Activated CD4-positive, alpha-beta T cell treated with anti-CD3 and anti-CD28 coated beads, Interleukin-2, amount 10 ng/mL, durations not matched to agents 24 days and 14 days (primary cell): ENCODE measurements at regions of chr3 and their contacts with region 1.

Region 1: GRCh38 chr3:39383045-39383880 is at the start of gene SLC25A38:
- DNase-seq: peak; percentile 94
- H3K4me3 Mint-ChIP-seq: peak within 1 kb of the TSS; percentile 100
- H3K27ac Mint-ChIP-seq: peak within 1 kb of the TSS; percentile 99
- H3K4me1 Mint-ChIP-seq: peaks cover 33% of the 10 kb centered on the region
- H3K27me3 Mint-ChIP-seq: no peaks in the 10 kb centered on the region
- total RNA-seq, gene SLC25A38: 37.8 and 38.2 TPM in 2 replicates

Region 2: DNA sequence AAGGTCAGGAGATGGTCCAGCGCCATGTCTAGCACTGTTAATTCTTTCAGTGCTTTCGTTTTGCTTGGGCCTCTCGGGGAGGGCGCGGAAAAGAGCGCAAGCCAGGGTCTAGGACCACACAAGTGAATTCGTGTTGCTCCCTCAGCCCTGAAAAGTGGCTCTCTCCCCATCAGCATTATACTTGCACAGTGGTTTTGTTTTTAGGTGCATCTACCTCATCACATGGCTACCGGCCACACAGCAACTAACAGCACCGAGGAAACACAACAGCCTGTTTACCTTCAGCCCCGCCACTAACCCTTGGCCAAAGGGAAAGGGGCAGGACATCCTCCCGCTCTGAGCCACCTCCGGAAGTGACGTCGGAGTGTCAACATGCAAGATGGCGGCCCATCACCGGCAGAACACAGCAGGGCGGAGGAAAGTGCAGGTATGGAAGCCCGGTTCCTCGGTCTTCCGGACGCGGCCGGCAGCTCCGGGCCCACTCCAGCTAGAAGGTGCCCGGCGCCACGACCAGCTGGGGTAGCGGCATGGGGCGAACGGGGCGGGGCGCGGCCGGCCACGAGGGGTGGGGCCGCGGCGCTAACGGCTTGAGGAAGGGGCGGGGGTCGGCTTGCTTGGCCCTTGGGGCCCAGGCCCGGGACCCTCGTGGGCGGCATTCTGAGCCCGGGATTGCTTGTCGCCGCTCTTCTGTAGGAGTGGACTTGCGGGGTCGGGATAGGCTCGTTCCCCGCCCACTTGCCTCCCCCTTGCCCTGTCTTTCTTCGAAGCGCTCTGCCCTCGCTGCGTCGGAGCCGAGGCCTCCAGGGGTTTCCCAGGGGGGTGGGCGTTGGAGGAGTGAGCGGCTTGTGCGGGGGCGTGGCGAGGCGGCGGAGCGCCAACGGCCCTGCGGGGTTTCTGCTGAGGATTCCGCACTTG is 331.4 kb before region 1 on chr3 and contains the starts of genes SCN11A and WDR48:
- intact Hi-C with region 1: loop called (anchors 5 kb)
- DNase-seq: peak; percentile 98
- H3K4me3 Mint-ChIP-seq: peak within 1 kb of the TSS; percentile 92
- H3K27ac Mint-ChIP-seq: peak within 1 kb of the TSS; percentile 96
- H3K4me1 Mint-ChIP-seq: peaks cover 22% of the 10 kb centered on the region
- H3K27me3 Mint-ChIP-seq: peaks cover 2% of the 10 kb centered on the region
- total RNA-seq, gene SCN11A: not detected in 2 replicates
- total RNA-seq, gene WDR48: 35.4 and 40.5 TPM in 2 replicates

Region 3: DNA sequence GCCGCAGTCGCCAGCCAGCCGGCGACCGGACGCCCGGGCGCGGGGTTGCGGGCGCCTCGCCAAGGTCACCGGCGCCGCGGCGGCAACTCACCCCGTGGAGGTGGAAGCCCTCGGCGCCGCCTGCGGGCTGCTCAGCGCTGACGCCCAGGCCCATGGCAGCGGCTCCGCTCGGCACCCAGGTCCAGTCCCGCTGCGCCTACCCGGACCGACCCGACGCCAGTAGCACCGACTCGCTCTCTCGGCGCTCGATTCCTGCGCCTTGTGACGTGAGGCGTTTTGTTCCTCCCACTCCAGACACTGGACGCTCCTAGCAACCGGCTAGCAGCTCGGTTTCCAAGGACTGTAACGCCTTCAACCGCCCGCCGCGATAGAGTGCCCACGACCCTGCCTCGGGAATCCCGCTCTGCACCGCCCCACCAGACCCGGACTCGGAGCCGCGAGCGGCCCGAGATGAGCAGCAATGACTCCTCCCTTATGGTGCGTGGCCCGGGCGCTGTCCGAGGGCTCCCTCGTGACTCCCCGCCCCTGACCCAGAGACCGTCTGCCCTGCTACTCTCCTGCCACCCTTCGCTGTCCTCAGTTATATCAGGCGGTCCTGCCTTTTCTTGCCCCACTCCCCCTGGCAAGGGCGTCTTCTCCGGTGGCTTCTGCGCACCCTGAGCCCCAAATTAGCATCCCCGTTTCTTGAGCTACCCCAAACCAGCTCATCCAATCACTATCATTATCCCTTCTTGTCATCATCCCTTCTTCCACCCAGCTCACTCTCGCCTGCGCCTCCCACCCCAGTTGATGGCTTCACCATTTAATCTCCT is 275.7 kb before region 1 on chr3 and contains the starts of genes GORASP1 and TTC21A:
- intact Hi-C with region 1: loop called (anchors 5 kb)
- DNase-seq: peak; percentile 91
- H3K4me3 Mint-ChIP-seq: peak within 1 kb of the TSS; percentile 92
- H3K27ac Mint-ChIP-seq: peak within 1 kb of the TSS; percentile 89
- H3K4me1 Mint-ChIP-seq: peaks cover 49% of the 10 kb centered on the region
- H3K27me3 Mint-ChIP-seq: no peaks in the 10 kb centered on the region
- total RNA-seq, gene GORASP1: 31.5 and 32.1 TPM in 2 replicates
- total RNA-seq, gene TTC21A: 0.54 and 0.89 TPM in 2 replicates

Region 4: DNA sequence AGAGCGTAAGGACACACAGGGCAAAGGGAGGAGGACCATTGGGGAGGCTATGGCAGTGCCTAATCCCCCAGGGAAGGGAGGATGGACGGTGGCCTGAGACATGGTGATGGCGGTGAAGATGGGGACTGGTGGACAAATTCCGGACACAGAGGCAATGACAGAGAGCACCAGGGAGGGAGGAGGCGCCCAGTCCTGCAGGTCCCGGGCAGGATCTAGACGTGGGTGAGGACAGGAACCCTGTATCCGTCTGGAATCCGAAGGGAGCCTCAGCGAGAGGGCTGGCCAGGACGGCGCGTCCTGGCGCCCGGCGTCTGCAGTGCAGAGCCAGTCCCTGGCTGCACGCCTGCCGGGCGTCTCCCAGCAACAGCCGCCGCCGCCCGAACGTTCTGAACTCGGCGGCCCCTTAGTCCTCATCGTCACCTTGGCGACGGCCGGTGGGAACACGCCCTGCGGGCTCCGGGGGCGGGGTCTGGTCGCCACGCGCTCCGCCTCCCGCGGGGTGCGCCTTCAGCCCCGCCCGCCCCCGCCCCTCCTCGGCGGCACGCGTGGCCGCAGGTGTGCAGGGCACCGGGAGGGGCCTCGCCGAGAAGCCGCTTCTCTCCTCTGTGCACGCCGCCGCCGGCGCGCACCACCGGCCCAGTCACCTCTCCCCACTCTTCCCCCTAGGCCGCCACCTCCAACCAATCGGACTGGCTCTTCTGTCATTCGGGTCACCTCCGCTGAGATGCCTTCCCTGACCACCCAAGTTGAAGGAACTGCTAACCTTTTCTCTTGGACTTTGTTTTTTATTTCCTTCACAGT is 202.5 kb before region 1 on chr3:
- intact Hi-C with region 1: loop called (anchors 5 kb)
- DNase-seq: peak; percentile 97
- H3K4me3 Mint-ChIP-seq: peak overlapping the region; percentile 84
- H3K27ac Mint-ChIP-seq: peak overlapping the region; percentile 69
- H3K4me1 Mint-ChIP-seq: peaks cover 50% of the 10 kb centered on the region
- H3K27me3 Mint-ChIP-seq: no peaks in the 10 kb centered on the region

Region 5: DNA sequence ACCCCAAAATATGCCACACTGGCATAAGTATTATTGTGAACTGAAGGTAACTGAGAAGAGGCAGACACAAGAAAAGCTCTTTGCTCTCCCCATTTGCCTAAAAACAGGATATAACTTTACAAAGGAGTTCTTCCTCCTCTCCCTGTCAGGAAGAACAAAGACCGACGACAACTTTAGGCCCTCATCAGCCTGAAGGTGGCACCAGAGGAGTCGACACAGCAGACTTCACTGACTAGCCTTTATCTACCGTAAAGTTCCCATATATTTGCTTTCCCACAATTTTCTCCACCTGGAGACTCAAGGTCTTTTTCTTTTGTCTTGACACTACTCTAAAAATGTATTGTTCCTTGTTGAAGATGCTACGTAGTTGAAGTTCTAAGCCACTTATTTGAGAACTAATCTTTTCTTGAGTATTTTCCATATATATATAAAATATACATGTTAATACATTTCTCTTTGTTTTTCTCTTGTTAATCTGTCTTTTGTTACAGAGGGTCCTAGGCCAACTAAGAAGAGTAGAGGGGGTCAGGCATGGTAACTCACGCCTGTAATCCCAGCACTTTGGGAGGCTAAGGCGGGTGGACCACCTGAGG is 174.7 kb before region 1 on chr3:
- intact Hi-C with region 1: loop called (anchors 5 kb)
- DNase-seq: peak; percentile 81
- H3K4me3 Mint-ChIP-seq: no peak overlapping the region
- H3K27ac Mint-ChIP-seq: no peak overlapping the region
- H3K4me1 Mint-ChIP-seq: peaks cover 15% of the 10 kb centered on the region
- H3K27me3 Mint-ChIP-seq: peaks cover 20% of the 10 kb centered on the region

Region 6: DNA sequence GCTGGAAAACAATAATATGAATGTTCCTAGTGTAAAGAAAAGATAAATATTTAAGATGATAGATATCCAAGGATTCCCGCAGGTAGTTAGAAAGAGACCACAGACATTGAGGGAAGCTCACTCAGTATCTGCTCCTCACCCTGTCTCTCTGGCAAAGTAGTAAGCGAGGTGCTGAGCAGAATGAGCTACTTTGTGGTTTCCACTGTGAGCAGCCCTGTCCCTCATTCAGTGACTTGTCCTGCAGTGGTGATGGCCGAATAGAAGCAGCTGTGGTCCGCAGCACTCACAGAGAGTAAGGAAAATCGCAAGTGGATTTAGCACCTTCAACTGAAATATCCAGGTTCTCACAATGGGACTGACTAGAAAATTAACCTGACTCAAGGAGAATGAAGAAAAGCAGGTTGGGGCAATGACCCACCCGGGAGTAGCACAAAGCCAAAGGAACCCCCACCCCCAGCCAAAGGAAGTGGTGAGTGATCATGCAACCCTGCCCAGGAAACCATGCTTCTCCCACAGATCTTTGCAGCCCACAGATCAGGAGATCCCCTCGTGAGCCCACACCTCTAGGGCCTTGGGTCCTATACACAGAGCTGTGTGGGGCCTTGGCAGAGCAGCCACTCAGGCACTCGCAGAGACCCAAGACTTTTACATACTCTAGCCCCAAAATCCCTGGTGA is 21.9 kb before region 1 on chr3:
- intact Hi-C with region 1: loop called (anchors 1 kb)
- DNase-seq: peak; percentile 90
- H3K4me3 Mint-ChIP-seq: peak overlapping the region; percentile 80
- H3K27ac Mint-ChIP-seq: peak overlapping the region; percentile 93
- H3K4me1 Mint-ChIP-seq: peaks cover 63% of the 10 kb centered on the region
- H3K27me3 Mint-ChIP-seq: peaks cover 9% of the 10 kb centered on the region

Region 7: GRCh38 chr3:39406368-39407258 is 23.4 kb after region 1 on chr3 and contains the start of gene RPSA:
- intact Hi-C with region 1: loop called (anchors 1 kb)
- DNase-seq: peak; percentile 99
- H3K4me3 Mint-ChIP-seq: peak within 1 kb of the TSS; percentile 92
- H3K27ac Mint-ChIP-seq: peak within 1 kb of the TSS; percentile 99
- H3K4me1 Mint-ChIP-seq: peaks cover 40% of the 10 kb centered on the region
- H3K27me3 Mint-ChIP-seq: peaks cover 2% of the 10 kb centered on the region
- total RNA-seq, gene RPSA: 1,932 and 1,935 TPM in 2 replicates